ENCODE measurements at regions of chr7 and their contacts with region 1.

Region 1: DNA sequence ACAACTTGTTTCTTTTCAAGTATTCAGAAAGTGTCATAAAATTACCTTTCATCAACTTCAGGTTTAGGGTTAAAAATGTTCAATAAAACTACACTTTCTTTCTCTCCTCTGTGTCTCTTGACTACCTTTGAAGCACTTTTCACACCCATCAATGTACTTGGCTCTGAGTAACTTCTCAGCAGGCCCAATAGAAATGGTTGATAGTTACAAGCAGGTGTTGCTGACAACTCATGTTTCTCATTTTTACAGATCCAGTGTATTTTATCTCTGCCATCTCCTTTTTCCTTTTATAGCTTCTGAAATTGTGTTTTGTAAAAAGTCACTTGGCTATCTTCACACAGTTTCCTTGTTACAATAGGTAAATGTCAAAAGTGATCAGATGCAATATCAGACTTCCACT is 348.0 kb downstream of the PHTF2 start:
- DNase-seq: no peak
- H3K4me3 Mint-ChIP-seq: no peak overlapping the region
- H3K27ac Mint-ChIP-seq: no peak overlapping the region
- H3K4me1 Mint-ChIP-seq: no peaks in the 10 kb centered on the region
- H3K27me3 Mint-ChIP-seq: peaks cover 70% of the 10 kb centered on the region
- CTCF ChIP-seq: no peak

Region 2: DNA sequence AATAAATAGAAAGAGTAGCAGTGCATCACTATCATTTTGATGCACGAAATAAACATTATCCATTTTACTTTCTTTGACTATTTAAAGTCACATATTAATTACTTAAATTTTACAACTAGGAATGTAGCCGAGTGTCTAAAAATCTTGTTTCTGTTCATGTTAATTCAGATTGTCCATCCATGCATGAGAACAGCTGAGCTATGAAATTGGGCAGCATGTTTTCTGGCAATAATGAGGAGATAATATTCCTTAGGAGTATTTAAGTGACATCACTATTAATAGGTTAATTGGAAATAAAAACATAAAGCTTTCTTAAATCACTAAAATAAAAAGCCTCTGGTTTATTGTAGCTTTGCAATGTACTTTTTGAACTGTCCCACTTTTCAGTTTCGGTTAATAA is 54.2 kb before region 1 on chr7:
- CTCF ChIA-PET with region 1: interaction called, 3 read pairs
- POLR2A ChIA-PET with region 1: no interaction called
- intact Hi-C with region 1: loop called (anchors 2 kb)
- DNase-seq: no peak
- H3K4me3 Mint-ChIP-seq: no peak overlapping the region
- H3K27ac Mint-ChIP-seq: no peak overlapping the region
- H3K4me1 Mint-ChIP-seq: no peaks in the 10 kb centered on the region
- H3K27me3 Mint-ChIP-seq: peaks cover 46% of the 10 kb centered on the region
- CTCF ChIP-seq: no peak

Measured in MCF 10A (cell line).